Naive thymus-derived CD4-positive, alpha-beta T cell (primary cell): ENCODE measurements at regions of chr11 and their contacts with region 1.

Region 1: GRCh38 chr11:47248664-47249377 is at the start of gene ACP2:
- DNase-seq: peak; percentile 83 to 91 (median 86)
- ATAC-seq: peak; percentile 99
- H3K4me3 ChIP-seq: peak within 1 kb of the TSS; percentile 93
- H3K4me3 Mint-ChIP-seq: peak within 1 kb of the TSS; percentile 93 to 100 (median 98)
- H3K27ac ChIP-seq: peak within 1 kb of the TSS; percentile 87
- H3K27ac Mint-ChIP-seq: peak within 1 kb of the TSS; percentile 94 to 100 (median 98)
- H3K4me1 ChIP-seq: peaks cover 11 to 15% of the 10 kb centered on the region in 2 donors
- H3K4me1 Mint-ChIP-seq: peaks cover 13 to 39% (median 29%) of the 10 kb centered on the region in 7 donors
- H3K27me3 ChIP-seq: no peaks in the 10 kb centered on the region
- H3K27me3 Mint-ChIP-seq: no peaks in the 10 kb centered on the region
- total RNA-seq, gene ACP2: 17.6 to 38.1 (median 24.3) TPM

Region 2: GRCh38 chr11:46936138-46937110 is 312.4 kb before region 1 on chr11 and contains the start of gene CSTPP1:
- CTCF ChIA-PET with region 1: no interaction called
- POLR2A ChIA-PET with region 1: interaction called, 3 read pairs
- intact Hi-C with region 1: loop called in 1 of 2 experiments (anchors 1 kb)
- DNase-seq: peak; percentile 80 to 92 (median 89)
- ATAC-seq: peak; percentile 99
- H3K4me3 ChIP-seq: peak within 1 kb of the TSS; percentile 76
- H3K4me3 Mint-ChIP-seq: peak within 1 kb of the TSS; percentile 86 to 100 (median 92)
- H3K27ac ChIP-seq: peak within 1 kb of the TSS; percentile 72
- H3K27ac Mint-ChIP-seq: peak within 1 kb of the TSS; percentile 89 to 98 (median 92)
- H3K4me1 ChIP-seq: peaks cover 0 to 11% of the 10 kb centered on the region in 2 donors
- H3K4me1 Mint-ChIP-seq: peaks cover 5 to 24% (median 21%) of the 10 kb centered on the region in 7 donors
- H3K27me3 ChIP-seq: no peaks in the 10 kb centered on the region
- H3K27me3 Mint-ChIP-seq: peaks cover 8 to 19% (median 9%) of the 10 kb centered on the region in 5 donors
- total RNA-seq, gene CSTPP1: 9.3 to 18.6 (median 16.1) TPM

Region 3: DNA sequence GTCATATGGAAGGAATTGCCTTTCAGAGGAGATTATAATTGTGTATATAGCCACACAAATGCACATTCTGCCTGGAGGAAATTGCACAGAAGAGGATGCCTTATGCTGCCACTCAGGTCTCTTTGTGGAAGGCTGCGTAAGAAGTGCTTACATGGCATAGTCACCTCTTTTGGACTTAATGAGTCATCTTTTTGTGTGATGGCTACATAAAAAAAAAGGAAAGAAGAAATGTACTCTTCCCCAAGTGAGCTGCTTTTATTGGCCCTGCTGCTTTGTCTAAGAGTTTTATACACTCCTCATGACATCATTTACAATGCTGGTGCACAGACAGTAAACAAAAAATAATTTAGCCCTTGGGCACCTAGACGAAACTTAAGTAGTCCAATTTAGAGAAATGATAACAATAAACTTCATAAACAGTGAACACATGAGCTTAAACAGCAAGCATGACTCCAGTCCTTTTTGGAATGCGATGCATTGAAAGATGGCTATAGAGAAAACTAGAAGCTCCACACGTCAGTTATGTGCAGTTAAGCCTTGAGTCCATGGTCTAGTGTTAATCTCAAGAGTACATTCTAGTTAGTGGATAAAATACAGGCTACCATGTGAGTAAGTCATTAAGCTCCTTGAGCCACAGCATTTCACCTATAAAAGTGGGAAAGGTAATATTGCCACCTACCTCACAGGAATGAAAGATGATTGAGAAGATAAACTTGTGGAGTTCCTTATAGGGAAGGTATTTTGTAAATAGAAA is 300.3 kb before region 1 on chr11:
- CTCF ChIA-PET with region 1: no interaction called
- POLR2A ChIA-PET with region 1: no interaction called
- intact Hi-C with region 1: no loop called
- DNase-seq: no peak
- ATAC-seq: no peak
- H3K4me3 ChIP-seq: no peak overlapping the region
- H3K4me3 Mint-ChIP-seq: no peak overlapping the region
- H3K27ac ChIP-seq: no peak overlapping the region
- H3K27ac Mint-ChIP-seq: no peak overlapping the region
- H3K4me1 ChIP-seq: no peaks in the 10 kb centered on the region
- H3K4me1 Mint-ChIP-seq: peaks cover 6 to 16% (median 11%) of the 10 kb centered on the region in 7 donors
- H3K27me3 ChIP-seq: no peaks in the 10 kb centered on the region
- H3K27me3 Mint-ChIP-seq: no peaks in the 10 kb centered on the region

Region 4: GRCh38 chr11:47233989-47234668 is 14.7 kb before region 1 on chr11:
- CTCF ChIA-PET with region 1: interaction called, 15 read pairs
- POLR2A ChIA-PET with region 1: interaction called, 17 read pairs
- intact Hi-C with region 1: loop called in 1 of 2 experiments (anchors 1 kb)
- DNase-seq: peak in 6 of 9 donors; percentile 17 to 46 (median 32)
- ATAC-seq: peak; percentile 8
- H3K4me3 ChIP-seq: peak overlapping the region; percentile 38
- H3K4me3 Mint-ChIP-seq: peak overlapping the region; percentile 35 to 90 (median 80)
- H3K27ac ChIP-seq: peak overlapping the region; percentile 81
- H3K27ac Mint-ChIP-seq: peak overlapping the region; percentile 77 to 99 (median 94)
- H3K4me1 ChIP-seq: peaks cover 5 to 13% of the 10 kb centered on the region in 2 donors
- H3K4me1 Mint-ChIP-seq: peaks cover 11 to 34% (median 30%) of the 10 kb centered on the region in 7 donors
- H3K27me3 ChIP-seq: no peaks in the 10 kb centered on the region
- H3K27me3 Mint-ChIP-seq: no peaks in the 10 kb centered on the region

Region 5: GRCh38 chr11:47259178-47259977 is 10.6 kb after region 1 on chr11:
- CTCF ChIA-PET with region 1: interaction called, 15 read pairs
- POLR2A ChIA-PET with region 1: interaction called, 18 read pairs
- intact Hi-C with region 1: loop called in 1 of 2 experiments (anchors 1 kb)
- DNase-seq: peak in 5 of 9 donors; percentile 23 to 42 (median 29)
- ATAC-seq: peak; percentile 80
- H3K4me3 ChIP-seq: no peak overlapping the region
- H3K4me3 Mint-ChIP-seq: no peak overlapping the region
- H3K27ac ChIP-seq: no peak overlapping the region
- H3K27ac Mint-ChIP-seq: peak overlapping the region in 1 of 9 donors; percentile 76
- H3K4me1 ChIP-seq: peaks cover 0 to 11% of the 10 kb centered on the region in 2 donors
- H3K4me1 Mint-ChIP-seq: peaks cover 11 to 28% (median 18%) of the 10 kb centered on the region in 7 donors
- H3K27me3 ChIP-seq: no peaks in the 10 kb centered on the region
- H3K27me3 Mint-ChIP-seq: no peaks in the 10 kb centered on the region

Region 6: GRCh38 chr11:47642099-47642855 is 393.5 kb after region 1 on chr11 and contains the start of gene MTCH2:
- CTCF ChIA-PET with region 1: no interaction called
- POLR2A ChIA-PET with region 1: no interaction called
- intact Hi-C with region 1: loop called in 1 of 2 experiments (anchors 1 kb)
- DNase-seq: peak; percentile 92 to 97 (median 95)
- ATAC-seq: peak; percentile 97
- H3K4me3 ChIP-seq: peak within 1 kb of the TSS; percentile 85
- H3K4me3 Mint-ChIP-seq: peak within 1 kb of the TSS; percentile 92 to 99 (median 96)
- H3K27ac ChIP-seq: peak within 1 kb of the TSS; percentile 83
- H3K27ac Mint-ChIP-seq: peak within 1 kb of the TSS; percentile 94 to 99 (median 97)
- H3K4me1 ChIP-seq: peaks cover 8 to 11% of the 10 kb centered on the region in 2 donors
- H3K4me1 Mint-ChIP-seq: peaks cover 17 to 32% (median 25%) of the 10 kb centered on the region in 7 donors
- H3K27me3 ChIP-seq: no peaks in the 10 kb centered on the region
- H3K27me3 Mint-ChIP-seq: no peaks in the 10 kb centered on the region
- total RNA-seq, gene MTCH2: 19.8 to 88.6 (median 21.1) TPM